ENCODE measurements at regions of chr11 and their contacts with region 1.

Region 1: DNA sequence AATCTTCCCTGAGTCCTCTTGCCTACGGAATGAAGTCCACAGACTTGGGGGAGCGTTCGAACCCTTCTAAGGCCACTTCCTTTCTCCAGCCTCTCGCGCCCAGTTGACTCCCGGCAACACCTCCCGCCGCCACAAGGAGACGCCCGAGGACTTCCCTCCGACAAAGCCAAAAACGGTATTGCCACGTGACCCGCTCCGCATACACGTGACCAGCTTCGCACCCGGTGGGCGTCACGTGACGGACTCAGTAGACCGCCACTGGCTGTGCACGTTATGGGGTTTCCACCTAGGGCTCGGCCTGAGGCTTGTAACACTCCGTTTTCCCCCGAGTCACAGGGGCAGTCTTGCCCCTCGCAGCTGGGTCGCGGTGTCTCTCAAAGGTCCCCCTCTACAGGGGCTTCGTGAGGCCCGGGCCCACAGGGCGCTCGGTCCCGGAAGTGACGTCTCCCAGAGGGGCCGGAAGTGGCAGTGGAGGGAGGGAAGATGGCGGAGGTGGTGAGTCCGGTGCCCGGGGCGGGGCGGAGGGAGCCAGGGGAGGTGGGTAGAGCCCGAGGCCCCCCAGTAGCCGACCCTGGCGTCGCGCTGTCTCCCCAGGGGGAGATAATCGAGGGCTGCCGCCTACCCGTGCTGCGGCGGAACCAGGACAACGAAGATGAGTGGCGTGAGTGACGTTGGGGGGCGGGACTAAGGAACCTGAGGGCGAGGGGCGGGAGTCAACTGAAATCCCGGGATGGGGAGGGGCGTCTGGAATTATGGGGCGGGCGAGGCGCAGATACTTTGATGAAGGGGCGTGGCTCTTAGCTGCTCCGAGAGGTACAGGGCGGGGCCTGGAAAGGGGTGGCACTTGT is at the start of gene KAT5:
- DNase-seq: peak; percentile 98 to 100 (median 99)
- H3K4me3 ChIP-seq: peak within 1 kb of the TSS; percentile 63 to 98
- H3K4me3 Mint-ChIP-seq: peak within 1 kb of the TSS; percentile 93 to 99 (median 96)
- H3K27ac ChIP-seq: peak within 1 kb of the TSS; percentile 98
- H3K27ac Mint-ChIP-seq: peak within 1 kb of the TSS; percentile 99 to 100 (median 99)
- H3K4me1 ChIP-seq: peaks cover 19% of the 10 kb centered on the region
- H3K4me1 Mint-ChIP-seq: peaks cover 9 to 38% (median 24%) of the 10 kb centered on the region in 4 donors
- H3K27me3 ChIP-seq: no peaks in the 10 kb centered on the region
- H3K27me3 Mint-ChIP-seq: no peaks in the 10 kb centered on the region
- total RNA-seq, gene KAT5: 93.5 to 106 TPM

Region 2: GRCh38 chr11:65637794-65638317 is 74.2 kb before region 1 on chr11 and contains the start of gene SIPA1:
- CTCF ChIA-PET with region 1: interaction called, 5 read pairs
- POLR2A ChIA-PET with region 1: interaction called, 10 read pairs
- intact Hi-C with region 1: no loop called
- DNase-seq: peak; percentile 63 to 85 (median 74)
- H3K4me3 ChIP-seq: peak within 1 kb of the TSS; percentile 72 to 86
- H3K4me3 Mint-ChIP-seq: peak within 1 kb of the TSS; percentile 90 to 98 (median 96)
- H3K27ac ChIP-seq: peak within 1 kb of the TSS; percentile 94
- H3K27ac Mint-ChIP-seq: peak within 1 kb of the TSS; percentile 97 to 100 (median 99)
- H3K4me1 ChIP-seq: peaks cover 71% of the 10 kb centered on the region
- H3K4me1 Mint-ChIP-seq: peaks cover 24 to 68% (median 46%) of the 10 kb centered on the region in 4 donors
- H3K27me3 ChIP-seq: no peaks in the 10 kb centered on the region
- H3K27me3 Mint-ChIP-seq: no peaks in the 10 kb centered on the region
- total RNA-seq, gene SIPA1: 150 to 169 TPM

Region 3: GRCh38 chr11:65662799-65663638 is 49.0 kb before region 1 on chr11 and contains the start of gene RELA:
- CTCF ChIA-PET with region 1: interaction called, 4 read pairs
- POLR2A ChIA-PET with region 1: interaction called, 20 read pairs
- intact Hi-C with region 1: loop called (anchors 2 kb)
- DNase-seq: peak; percentile 87 to 95 (median 91)
- H3K4me3 ChIP-seq: peak within 1 kb of the TSS; percentile 96 to 97
- H3K4me3 Mint-ChIP-seq: peak within 1 kb of the TSS; percentile 89 to 95 (median 90)
- H3K27ac ChIP-seq: peak within 1 kb of the TSS; percentile 98
- H3K27ac Mint-ChIP-seq: peak within 1 kb of the TSS; percentile 96 to 98 (median 96)
- H3K4me1 ChIP-seq: peaks cover 38% of the 10 kb centered on the region
- H3K4me1 Mint-ChIP-seq: peaks cover 20 to 45% (median 33%) of the 10 kb centered on the region in 4 donors
- H3K27me3 ChIP-seq: no peaks in the 10 kb centered on the region
- H3K27me3 Mint-ChIP-seq: no peaks in the 10 kb centered on the region
- total RNA-seq, gene RELA: 170 to 173 TPM

Region 4: DNA sequence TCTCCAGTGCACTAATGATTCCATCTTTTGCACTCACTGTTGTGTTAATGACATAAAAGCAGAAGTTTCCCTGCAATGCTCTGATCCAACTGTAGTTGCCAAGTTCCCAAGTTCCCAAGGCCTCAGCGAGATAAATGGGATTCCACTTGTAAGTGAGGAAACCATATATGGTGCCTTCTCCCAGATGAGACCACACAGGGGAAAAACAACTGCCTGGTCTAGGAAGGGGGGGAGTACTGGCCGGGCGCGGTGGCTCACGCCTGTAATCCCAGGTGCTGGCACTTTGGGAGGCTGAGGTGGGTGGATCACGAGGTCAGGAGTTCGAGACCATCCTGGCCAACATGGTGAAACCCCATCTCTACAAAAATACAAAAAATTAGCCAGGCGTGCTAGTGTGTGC is 26.0 kb before region 1 on chr11:
- CTCF ChIA-PET with region 1: no interaction called
- POLR2A ChIA-PET with region 1: no interaction called
- intact Hi-C with region 1: no loop called
- DNase-seq: no peak
- H3K4me3 ChIP-seq: no peak overlapping the region
- H3K4me3 Mint-ChIP-seq: no peak overlapping the region
- H3K27ac ChIP-seq: no peak overlapping the region
- H3K27ac Mint-ChIP-seq: no peak overlapping the region
- H3K4me1 ChIP-seq: no peaks in the 10 kb centered on the region
- H3K4me1 Mint-ChIP-seq: no peaks in the 10 kb centered on the region
- H3K27me3 ChIP-seq: no peaks in the 10 kb centered on the region
- H3K27me3 Mint-ChIP-seq: peaks cover 2 to 3% of the 10 kb centered on the region in 2 donors

Region 5: DNA sequence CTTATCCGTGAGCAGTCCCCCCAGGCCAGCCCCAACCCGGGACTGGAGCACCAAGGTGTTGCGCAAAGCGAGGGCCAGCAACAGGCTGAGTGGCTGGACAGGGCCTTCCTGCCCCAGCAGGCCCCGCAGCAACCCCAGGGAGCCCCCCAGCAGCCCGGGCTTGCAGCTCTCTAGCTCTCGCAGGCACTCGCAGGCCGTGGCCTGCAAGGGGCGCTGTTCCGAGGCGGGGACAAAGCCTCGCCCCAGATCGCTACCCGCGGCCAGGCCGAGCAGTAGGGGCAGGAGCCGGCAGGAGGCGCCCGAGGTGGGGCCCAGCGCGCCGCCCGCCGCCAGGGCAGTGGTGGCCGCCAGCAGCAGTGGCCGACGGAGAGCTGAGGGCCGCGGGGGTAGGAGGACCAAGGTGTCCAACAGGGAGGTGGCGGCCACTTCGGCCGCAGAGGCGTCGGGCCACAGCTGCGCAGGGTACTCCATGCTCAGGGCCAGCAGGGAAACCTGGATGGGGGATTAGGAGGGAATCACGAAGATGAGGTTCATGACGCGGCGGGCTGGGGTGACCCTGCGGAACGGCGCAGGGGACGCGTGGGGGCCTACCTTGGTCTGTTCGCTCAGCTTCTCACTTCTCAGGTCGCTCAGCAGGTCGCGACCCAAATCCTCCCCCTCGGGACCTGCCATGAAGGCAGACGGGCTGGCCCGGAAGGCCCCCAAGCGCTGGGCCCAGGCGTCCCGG is 68.0 kb after region 1 on chr11:
- CTCF ChIA-PET with region 1: interaction called, 39 read pairs
- POLR2A ChIA-PET with region 1: interaction called, 13 read pairs
- intact Hi-C with region 1: loop called (anchors 2 kb)
- DNase-seq: peak; percentile 74 to 79 (median 77)
- H3K4me3 ChIP-seq: peak overlapping the region; percentile 54 to 65
- H3K4me3 Mint-ChIP-seq: peak overlapping the region; percentile 74 to 89 (median 84)
- H3K27ac ChIP-seq: peak overlapping the region; percentile 62
- H3K27ac Mint-ChIP-seq: peak overlapping the region in 6 of 7 donors; percentile 49 to 74 (median 72)
- H3K4me1 ChIP-seq: peaks cover 18% of the 10 kb centered on the region
- H3K4me1 Mint-ChIP-seq: peaks cover 5 to 20% (median 13%) of the 10 kb centered on the region in 4 donors
- H3K27me3 ChIP-seq: no peaks in the 10 kb centered on the region
- H3K27me3 Mint-ChIP-seq: no peaks in the 10 kb centered on the region

Region 6: DNA sequence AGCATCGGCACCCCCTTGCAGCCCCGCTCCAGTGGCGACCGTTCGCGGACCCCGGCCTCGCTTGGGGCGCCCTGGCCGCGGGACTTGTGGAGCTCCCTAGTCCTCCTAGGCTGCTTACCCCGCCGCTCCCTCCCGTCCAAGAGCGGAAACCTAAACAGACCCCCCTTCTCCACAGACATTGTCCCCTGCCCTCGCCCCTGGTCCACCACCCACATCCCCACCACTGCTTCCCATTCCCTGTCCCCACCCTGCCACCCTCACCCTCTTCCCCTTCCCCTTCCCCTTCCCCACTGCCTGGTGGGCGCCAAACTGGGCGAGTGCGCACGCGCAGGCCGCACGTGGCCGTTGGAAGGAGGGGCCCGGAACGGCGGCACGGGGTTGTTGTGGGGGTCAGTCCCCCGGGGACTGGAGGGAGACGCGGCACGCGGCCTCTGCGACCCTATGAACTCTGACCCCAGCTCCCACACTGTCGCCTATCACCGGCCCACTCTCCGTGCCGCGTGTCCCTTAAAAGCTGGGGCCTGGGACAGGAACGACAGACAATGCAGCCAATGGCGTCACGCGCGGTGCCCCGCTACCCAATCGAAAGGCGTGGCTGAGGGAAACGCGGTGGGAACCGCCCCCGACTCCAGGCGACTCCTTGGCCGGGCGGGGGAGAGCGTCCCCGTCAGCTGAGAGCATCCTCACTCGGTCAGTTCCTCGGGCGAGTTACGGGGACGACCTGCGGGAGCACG is 121.5 kb after region 1 on chr11 and contains the start of gene SNX32:
- CTCF ChIA-PET with region 1: interaction called, 12 read pairs
- POLR2A ChIA-PET with region 1: interaction called, 10 read pairs
- intact Hi-C with region 1: no loop called
- DNase-seq: peak; percentile 91 to 94 (median 93)
- H3K4me3 ChIP-seq: peak within 1 kb of the TSS; percentile 31 to 67
- H3K4me3 Mint-ChIP-seq: no peak within 1 kb of the TSS
- H3K27ac ChIP-seq: peak within 1 kb of the TSS; percentile 17
- H3K27ac Mint-ChIP-seq: peak within 1 kb of the TSS in 5 of 7 donors; percentile 29 to 82 (median 70)
- H3K4me1 ChIP-seq: peaks cover 20% of the 10 kb centered on the region
- H3K4me1 Mint-ChIP-seq: peaks cover 8% of the 10 kb centered on the region in 4 donors
- H3K27me3 ChIP-seq: no peaks in the 10 kb centered on the region
- H3K27me3 Mint-ChIP-seq: no peaks in the 10 kb centered on the region
- total RNA-seq, gene SNX32: 0.42 to 0.64 TPM

Region 7: DNA sequence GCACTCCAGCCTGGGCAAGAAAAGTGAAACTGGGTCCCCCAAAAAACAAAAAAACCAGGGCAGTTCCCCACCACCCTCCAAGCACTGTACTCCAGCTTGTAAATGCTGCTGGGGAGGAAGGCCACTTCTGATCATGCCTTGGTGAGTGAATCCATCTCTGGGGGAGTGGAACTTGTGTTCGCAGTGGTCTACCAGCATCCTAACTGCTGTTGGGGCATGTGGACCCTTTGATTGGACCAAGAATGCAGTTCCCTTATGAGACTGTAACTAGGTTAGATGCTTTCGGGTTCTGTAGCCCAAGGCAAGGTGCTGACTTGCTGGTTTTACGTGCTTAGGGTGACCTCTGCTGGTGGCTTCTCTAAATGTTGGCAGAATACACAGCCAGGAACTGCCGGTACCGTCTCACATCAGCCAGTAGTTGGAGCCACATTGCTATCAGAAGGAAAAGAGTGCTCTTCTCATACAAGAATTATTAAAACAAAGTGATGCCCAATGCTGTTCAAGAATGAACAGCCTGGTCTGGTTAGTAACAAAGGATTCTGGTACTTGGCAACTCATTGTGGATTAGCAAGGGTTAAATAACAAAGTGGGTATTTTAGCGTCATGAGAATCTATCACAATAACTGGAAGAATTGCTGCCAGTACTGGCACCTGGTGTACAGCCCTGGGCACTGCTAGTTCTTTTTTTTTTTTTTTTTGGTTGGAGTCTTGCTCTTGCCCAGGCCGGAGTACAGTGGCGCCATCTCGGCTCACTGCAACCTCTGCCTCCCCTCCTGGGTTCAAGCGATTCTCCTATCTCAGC is 277.0 kb after region 1 on chr11:
- CTCF ChIA-PET with region 1: interaction called, 15 read pairs
- POLR2A ChIA-PET with region 1: interaction called, 6 read pairs
- intact Hi-C with region 1: loop called (anchors 1 kb)
- DNase-seq: peak; percentile 92 to 94 (median 93)
- H3K4me3 ChIP-seq: no peak overlapping the region
- H3K4me3 Mint-ChIP-seq: peak overlapping the region in 1 of 8 donors; percentile 3
- H3K27ac ChIP-seq: no peak overlapping the region
- H3K27ac Mint-ChIP-seq: peak overlapping the region; percentile 68 to 95 (median 86)
- H3K4me1 ChIP-seq: peaks cover 6% of the 10 kb centered on the region
- H3K4me1 Mint-ChIP-seq: peaks cover 5 to 7% (median 6%) of the 10 kb centered on the region in 4 donors
- H3K27me3 ChIP-seq: no peaks in the 10 kb centered on the region
- H3K27me3 Mint-ChIP-seq: no peaks in the 10 kb centered on the region

Region 8: GRCh38 chr11:66022401-66023185 is 310.6 kb after region 1 on chr11:
- CTCF ChIA-PET with region 1: interaction called, 15 read pairs
- POLR2A ChIA-PET with region 1: interaction called, 3 read pairs
- intact Hi-C with region 1: no loop called
- DNase-seq: peak; percentile 59 to 76 (median 63)
- H3K4me3 ChIP-seq: no peak overlapping the region
- H3K4me3 Mint-ChIP-seq: peak overlapping the region in 4 of 8 donors; percentile 33 to 72 (median 56)
- H3K27ac ChIP-seq: no peak overlapping the region
- H3K27ac Mint-ChIP-seq: peak overlapping the region in 1 of 7 donors; percentile 48
- H3K4me1 ChIP-seq: peaks cover 6% of the 10 kb centered on the region
- H3K4me1 Mint-ChIP-seq: peaks cover 0 to 9% (median 6%) of the 10 kb centered on the region in 4 donors
- H3K27me3 ChIP-seq: no peaks in the 10 kb centered on the region
- H3K27me3 Mint-ChIP-seq: peaks cover 4 to 6% of the 10 kb centered on the region in 2 donors

Region 9: DNA sequence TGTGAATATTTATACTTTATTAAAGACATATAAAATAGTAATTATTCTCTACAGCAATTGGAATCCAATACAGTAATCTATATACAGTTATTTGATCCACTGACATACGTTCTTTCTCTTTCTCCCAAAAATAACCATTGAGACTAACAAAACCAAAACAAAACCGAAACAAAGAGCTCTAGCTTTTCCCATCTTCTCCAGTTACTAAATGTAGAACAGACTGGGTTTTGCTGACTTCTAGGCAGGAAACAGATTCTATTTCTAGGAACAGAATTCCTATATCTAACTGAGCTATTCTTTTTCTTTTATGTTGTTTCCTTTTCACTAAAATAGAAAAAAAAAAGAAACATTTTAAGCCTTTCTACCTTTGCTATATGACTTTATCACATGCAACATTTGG is 438.1 kb after region 1 on chr11:
- CTCF ChIA-PET with region 1: no interaction called
- POLR2A ChIA-PET with region 1: no interaction called
- intact Hi-C with region 1: no loop called
- DNase-seq: no peak
- H3K4me3 ChIP-seq: no peak overlapping the region
- H3K4me3 Mint-ChIP-seq: no peak overlapping the region
- H3K27ac ChIP-seq: no peak overlapping the region
- H3K27ac Mint-ChIP-seq: peak overlapping the region in 2 of 7 donors; percentile 1 to 61
- H3K4me1 ChIP-seq: peaks cover 14% of the 10 kb centered on the region
- H3K4me1 Mint-ChIP-seq: peaks cover 24 to 54% (median 38%) of the 10 kb centered on the region in 4 donors
- H3K27me3 ChIP-seq: no peaks in the 10 kb centered on the region
- H3K27me3 Mint-ChIP-seq: no peaks in the 10 kb centered on the region